Activated CD4-positive, alpha-beta memory T cell treated with anti-CD3 and anti-CD28 coated beads for 36 hours (primary cell): ENCODE measurements at regions of chr9 and their contacts with region 1.

Region 1: DNA sequence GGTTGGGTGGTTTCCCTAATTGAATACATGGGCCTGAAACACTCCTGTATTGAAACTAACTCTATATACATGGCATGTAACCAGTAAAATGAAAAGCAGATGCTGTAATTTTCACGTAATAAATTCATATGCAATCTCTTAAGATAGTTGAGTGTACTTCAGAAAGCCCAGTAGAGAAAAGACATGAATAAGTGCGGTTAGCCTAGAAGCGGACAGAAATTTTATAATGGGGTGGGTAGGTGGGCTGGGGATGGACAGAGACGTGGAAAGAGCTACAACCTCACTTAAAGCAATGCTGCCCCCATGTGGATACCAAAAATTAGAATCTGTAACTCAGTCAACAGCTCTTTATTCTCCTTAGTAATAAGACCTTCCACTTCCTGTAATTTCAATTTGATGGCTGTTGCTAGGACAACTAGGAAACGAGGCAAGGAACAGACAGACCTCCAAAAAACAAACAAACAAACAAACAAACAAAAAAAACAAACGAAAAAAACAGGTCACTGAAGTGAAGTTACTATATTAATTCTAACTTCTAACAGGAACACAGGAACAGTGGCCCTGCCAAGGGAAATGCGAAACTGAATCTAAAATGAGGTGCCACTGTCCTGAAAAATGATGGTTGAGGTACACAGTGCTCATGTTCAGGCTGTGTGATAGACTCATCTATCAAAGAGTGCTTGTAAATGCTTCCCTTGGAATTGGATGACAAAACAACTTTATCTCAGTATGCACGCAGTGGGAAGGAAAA is 103.4 kb upstream of the GNA14 start:
- DNase-seq: no peak
- H3K4me3 Mint-ChIP-seq: no peak overlapping the region
- H3K27ac Mint-ChIP-seq: no peak overlapping the region
- H3K4me1 Mint-ChIP-seq: peaks cover 21% of the 10 kb centered on the region
- H3K27me3 Mint-ChIP-seq: no peaks in the 10 kb centered on the region

Region 2: GRCh38 chr9:77433675-77434445 is 317.7 kb before region 1 on chr9:
- CTCF ChIA-PET with region 1: interaction called, 29 read pairs
- POLR2A ChIA-PET with region 1: no interaction called
- intact Hi-C with region 1: loop called (anchors 2 kb)
- DNase-seq: peak; percentile 65
- H3K4me3 Mint-ChIP-seq: no peak overlapping the region
- H3K27ac Mint-ChIP-seq: no peak overlapping the region
- H3K4me1 Mint-ChIP-seq: peaks cover 3% of the 10 kb centered on the region
- H3K27me3 Mint-ChIP-seq: no peaks in the 10 kb centered on the region

Region 3: DNA sequence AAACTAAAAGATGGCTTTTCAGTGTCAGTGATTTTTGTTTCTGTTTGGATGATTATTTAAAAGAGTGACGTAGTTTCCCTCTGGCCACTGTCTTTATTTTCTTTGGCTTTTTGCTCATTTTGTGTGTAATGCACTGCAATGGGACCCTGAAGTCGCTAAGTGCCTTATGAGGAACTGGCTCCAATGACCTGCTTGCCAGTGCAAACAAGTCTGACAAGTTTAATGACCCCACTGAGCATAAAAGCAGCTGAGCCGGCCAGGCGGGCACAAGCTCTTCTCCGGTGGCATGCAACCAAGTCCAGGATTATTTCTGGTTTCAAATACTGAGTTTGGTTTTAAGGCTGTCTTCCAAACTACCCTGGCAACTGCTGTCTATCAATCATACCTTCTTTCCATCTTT is 87.8 kb before region 1 on chr9:
- CTCF ChIA-PET with region 1: no interaction called
- POLR2A ChIA-PET with region 1: no interaction called
- intact Hi-C with region 1: loop called (anchors 1 kb)
- DNase-seq: no peak
- H3K4me3 Mint-ChIP-seq: no peak overlapping the region
- H3K27ac Mint-ChIP-seq: no peak overlapping the region
- H3K4me1 Mint-ChIP-seq: no peaks in the 10 kb centered on the region
- H3K27me3 Mint-ChIP-seq: peaks cover 2% of the 10 kb centered on the region

Region 4: DNA sequence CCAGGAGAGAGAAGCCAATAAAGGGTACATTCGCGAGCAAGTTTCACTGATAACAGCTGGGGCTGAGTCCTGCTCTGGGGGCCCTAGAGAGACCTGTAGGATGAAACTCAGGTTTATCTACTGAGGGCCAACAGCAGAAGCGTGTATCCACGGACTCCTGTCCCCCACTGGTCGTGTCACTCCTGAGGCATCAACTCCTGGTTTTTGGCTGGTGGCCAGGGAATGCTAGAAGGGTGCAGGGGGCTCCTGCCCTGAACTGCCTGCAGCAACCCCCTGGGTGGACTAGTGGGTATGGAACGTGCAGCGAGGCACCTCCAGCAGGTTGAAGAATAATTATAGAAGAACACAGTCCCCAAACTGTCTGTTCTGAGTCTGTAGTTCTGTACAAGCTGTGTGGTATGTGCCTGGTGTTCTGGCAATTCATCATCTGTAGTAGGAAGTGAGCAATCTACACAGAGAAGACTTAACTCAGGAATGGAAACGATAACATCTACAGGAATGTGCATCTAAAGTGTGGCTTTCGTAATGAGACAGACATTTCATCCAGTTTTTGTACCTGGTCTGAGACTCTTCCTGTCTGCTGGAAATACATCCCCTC is 38.9 kb before region 1 on chr9:
- CTCF ChIA-PET with region 1: no interaction called
- POLR2A ChIA-PET with region 1: no interaction called
- intact Hi-C with region 1: no loop called
- DNase-seq: no peak
- H3K4me3 Mint-ChIP-seq: no peak overlapping the region
- H3K27ac Mint-ChIP-seq: no peak overlapping the region
- H3K4me1 Mint-ChIP-seq: no peaks in the 10 kb centered on the region
- H3K27me3 Mint-ChIP-seq: peaks cover 1% of the 10 kb centered on the region

Region 5: DNA sequence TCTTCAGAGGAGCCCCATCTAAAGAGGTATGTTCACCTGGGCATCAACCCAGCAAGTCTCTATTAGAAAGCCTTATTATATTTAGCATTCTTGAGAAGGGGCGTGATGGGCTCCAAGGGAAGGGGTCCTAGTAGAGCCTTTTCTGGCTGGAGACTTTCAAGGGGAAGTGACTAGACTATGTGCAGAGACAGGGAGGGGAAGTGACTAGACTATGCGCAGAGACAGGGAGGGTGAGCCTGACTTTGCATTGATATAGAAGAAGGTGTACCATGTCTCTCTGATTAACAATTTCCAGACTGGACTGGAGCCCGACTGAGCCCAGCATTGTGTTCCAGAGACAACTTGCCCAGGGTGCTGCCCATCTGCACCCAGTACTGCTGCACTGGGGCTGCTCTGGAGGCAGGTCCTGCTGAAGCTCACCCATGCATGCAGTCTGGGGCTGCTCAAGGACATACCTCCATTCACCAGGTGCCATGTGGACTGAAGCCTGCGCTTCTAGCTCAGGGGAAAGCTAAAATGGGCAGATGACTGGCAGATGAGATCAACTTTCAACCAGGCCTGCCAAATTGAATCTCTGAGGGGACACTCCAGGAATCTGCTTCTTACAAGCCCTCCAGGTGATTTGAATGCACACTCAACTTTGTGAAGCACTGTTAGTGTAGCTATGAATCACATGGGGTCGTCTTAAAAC is 20.4 kb before region 1 on chr9:
- CTCF ChIA-PET with region 1: interaction called, 19 read pairs
- POLR2A ChIA-PET with region 1: no interaction called
- intact Hi-C with region 1: loop called (anchors 1 kb)
- DNase-seq: no peak
- H3K4me3 Mint-ChIP-seq: no peak overlapping the region
- H3K27ac Mint-ChIP-seq: no peak overlapping the region
- H3K4me1 Mint-ChIP-seq: peaks cover 45% of the 10 kb centered on the region
- H3K27me3 Mint-ChIP-seq: no peaks in the 10 kb centered on the region

Region 6: DNA sequence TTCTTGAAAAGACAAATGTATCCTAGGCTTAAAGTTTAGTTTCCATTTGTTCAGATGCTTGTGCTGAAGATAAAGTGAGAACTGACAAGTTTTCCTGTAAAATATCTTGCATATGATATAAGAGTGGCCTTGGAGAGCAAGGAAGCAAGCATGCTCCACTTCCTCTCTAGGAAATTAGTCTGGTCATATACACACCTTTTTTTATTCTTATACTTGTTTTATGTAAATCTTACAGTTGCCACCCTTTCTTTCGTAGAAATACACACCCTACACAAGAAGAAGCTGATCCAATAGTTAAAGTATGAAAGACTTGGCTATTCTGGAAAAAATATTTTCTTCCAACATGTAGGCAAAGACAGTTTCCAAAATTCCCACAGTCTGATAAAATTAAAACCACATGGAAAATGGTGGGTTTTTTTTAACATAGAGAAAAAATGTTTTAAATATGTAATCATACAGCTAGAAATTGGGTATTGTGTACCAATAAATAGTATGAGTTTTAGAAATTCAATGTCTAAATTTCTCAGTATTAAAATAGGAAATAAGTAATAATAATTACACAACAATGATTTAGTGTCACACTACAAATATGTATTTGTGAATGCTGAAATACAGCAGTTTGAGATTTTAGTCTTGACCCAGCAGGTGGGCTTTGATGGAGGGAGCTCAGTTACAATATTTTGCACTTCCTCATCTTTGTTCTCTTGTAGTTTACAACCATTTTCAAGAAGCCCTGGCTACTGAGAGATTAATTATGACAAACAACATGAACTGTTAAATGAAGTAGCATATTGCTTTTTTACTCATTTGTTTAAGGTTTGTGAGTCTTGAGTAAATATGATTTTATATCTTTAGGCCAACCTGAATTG is 82.3 kb after region 1 on chr9:
- CTCF ChIA-PET with region 1: no interaction called
- POLR2A ChIA-PET with region 1: no interaction called
- intact Hi-C with region 1: no loop called
- DNase-seq: no peak
- H3K4me3 Mint-ChIP-seq: no peak overlapping the region
- H3K27ac Mint-ChIP-seq: no peak overlapping the region
- H3K4me1 Mint-ChIP-seq: peaks cover 19% of the 10 kb centered on the region
- H3K27me3 Mint-ChIP-seq: no peaks in the 10 kb centered on the region

Region 7: GRCh38 chr9:77864211-77864889 is 112.8 kb after region 1 on chr9:
- CTCF ChIA-PET with region 1: no interaction called
- POLR2A ChIA-PET with region 1: no interaction called
- intact Hi-C with region 1: no loop called
- DNase-seq: no peak
- H3K4me3 Mint-ChIP-seq: no peak overlapping the region
- H3K27ac Mint-ChIP-seq: no peak overlapping the region
- H3K4me1 Mint-ChIP-seq: peaks cover 9% of the 10 kb centered on the region
- H3K27me3 Mint-ChIP-seq: no peaks in the 10 kb centered on the region

Region 8: DNA sequence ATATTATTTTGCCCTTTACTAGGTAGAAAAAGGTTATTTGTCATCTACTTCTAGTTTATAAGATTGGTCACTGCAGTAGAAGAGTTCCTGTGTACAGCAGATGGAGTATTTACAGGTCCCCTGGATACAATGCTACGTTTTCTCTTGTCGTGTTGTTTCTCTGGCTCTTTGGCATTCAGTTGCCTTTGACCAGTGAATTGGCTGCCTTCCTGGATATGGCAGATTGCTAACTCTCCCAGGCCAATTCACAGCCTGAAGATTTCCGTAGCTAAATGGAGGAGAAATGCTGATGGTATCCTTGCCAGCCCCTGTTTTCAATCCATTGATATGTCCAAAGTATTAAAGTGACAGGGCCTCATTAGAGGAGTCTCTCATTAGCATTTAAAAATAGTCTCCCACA is 312.6 kb after region 1 on chr9:
- CTCF ChIA-PET with region 1: no interaction called
- POLR2A ChIA-PET with region 1: no interaction called
- intact Hi-C with region 1: no loop called
- DNase-seq: no peak
- H3K4me3 Mint-ChIP-seq: no peak overlapping the region
- H3K27ac Mint-ChIP-seq: no peak overlapping the region
- H3K4me1 Mint-ChIP-seq: peaks cover 3% of the 10 kb centered on the region
- H3K27me3 Mint-ChIP-seq: no peaks in the 10 kb centered on the region